ENCODE measurements at regions of chr4 and their contacts with region 1.

Region 1: GRCh38 chr4:54961357-54961975 is 163.9 kb downstream of the KDR start:
- DNase-seq: peak; percentile 2 to 4
- ATAC-seq: peak; percentile 64 to 66; a peak in 4 of 6 replicates
- H3K4me3 ChIP-seq: no peak overlapping the region
- H3K27ac ChIP-seq: no peak overlapping the region
- H3K4me1 ChIP-seq: no peaks in the 10 kb centered on the region
- CTCF ChIP-seq: peak; percentile 25
- EP300 ChIP-seq: no peak
- POLR2A ChIP-seq: no peak
- RAD21 ChIP-seq: peak in 1 of 2 experiments; percentile 35; a peak in 1 of 5 replicates

Region 2: GRCh38 chr4:54318904-54319303 is 642.6 kb before region 1 on chr4:
- CTCF ChIA-PET with region 1: interaction called, 11 read pairs
- POLR2A ChIA-PET with region 1: no interaction called
- DNase-seq: peak; percentile 11 to 54
- ATAC-seq: peak in 1 of 2 experiments; percentile 55; a peak in 3 of 6 replicates
- H3K4me3 ChIP-seq: no peak overlapping the region
- H3K27ac ChIP-seq: no peak overlapping the region
- H3K4me1 ChIP-seq: no peaks in the 10 kb centered on the region
- CTCF ChIP-seq: peak; percentile 39; the same call in 2 of the 3 replicates
- EP300 ChIP-seq: no peak
- POLR2A ChIP-seq: no peak
- RAD21 ChIP-seq: peak; percentile 14 to 40; a peak in 1 of 5 replicates

Region 3: DNA sequence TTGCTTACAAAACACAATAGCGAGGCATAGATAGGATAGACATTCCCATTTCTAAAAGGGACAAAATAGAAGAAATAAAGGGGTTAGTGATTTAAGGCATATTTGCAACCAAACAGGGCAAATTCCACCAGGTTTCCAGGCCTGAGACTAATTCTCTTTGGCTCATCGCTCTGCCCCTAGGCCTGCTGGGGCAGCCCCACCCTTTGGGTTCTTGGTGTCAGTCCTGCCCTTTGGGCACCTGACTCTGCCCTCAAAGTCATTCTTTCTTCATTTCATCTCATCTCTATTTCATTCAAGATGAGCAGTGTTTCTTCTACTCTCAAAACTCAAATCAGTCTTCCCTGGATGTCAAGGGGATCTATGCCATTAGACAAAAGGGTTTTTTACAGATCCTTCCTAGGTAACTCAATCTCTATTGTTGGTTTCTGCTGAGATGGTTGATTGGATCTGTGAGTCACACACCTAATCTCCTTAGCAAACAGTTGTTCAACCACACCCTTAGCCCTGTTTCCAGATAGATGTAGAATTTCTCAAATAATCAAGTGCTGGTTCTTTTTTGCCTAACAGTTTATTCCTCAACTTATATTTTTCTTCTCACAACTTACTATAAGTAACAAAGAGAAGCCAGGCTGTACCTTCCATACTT is 36.7 kb before region 1 on chr4:
- CTCF ChIA-PET with region 1: no interaction called
- POLR2A ChIA-PET with region 1: no interaction called
- DNase-seq: no peak
- ATAC-seq: no peak
- H3K4me3 ChIP-seq: no peak overlapping the region
- H3K27ac ChIP-seq: no peak overlapping the region
- H3K4me1 ChIP-seq: no peaks in the 10 kb centered on the region
- CTCF ChIP-seq: no peak
- EP300 ChIP-seq: no peak
- POLR2A ChIP-seq: no peak
- RAD21 ChIP-seq: no peak

Region 4: DNA sequence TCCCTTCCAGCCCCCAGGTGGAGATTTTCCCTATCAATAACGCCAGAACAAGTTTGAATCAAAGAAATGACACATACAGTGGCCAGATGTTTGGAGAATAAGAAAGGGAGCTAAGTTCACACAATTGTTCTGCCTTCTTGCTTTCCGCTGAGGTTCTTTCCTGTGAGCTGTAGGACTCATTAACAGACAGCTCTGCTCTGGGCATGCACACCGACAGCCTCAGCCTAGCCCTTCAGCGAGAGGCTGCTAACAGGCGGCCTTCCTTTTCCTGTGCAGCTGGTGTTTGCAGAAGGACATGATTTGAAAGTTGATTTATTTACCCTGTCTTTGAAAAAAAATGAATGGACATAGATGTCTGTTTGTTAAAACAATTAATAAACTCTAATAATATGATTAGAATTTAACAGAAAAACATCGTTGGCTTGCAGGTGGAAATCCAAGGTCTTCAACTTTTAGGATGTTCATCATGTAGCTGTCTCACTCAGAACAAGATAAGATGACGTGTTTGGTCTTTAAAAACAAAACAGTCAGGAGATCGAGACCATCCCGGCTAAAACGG is 19.4 kb before region 1 on chr4:
- CTCF ChIA-PET with region 1: no interaction called
- POLR2A ChIA-PET with region 1: no interaction called
- DNase-seq: no peak
- ATAC-seq: no peak
- H3K4me3 ChIP-seq: no peak overlapping the region
- H3K27ac ChIP-seq: no peak overlapping the region
- H3K4me1 ChIP-seq: no peaks in the 10 kb centered on the region
- CTCF ChIP-seq: no peak
- EP300 ChIP-seq: no peak
- POLR2A ChIP-seq: no peak
- RAD21 ChIP-seq: no peak

Region 5: DNA sequence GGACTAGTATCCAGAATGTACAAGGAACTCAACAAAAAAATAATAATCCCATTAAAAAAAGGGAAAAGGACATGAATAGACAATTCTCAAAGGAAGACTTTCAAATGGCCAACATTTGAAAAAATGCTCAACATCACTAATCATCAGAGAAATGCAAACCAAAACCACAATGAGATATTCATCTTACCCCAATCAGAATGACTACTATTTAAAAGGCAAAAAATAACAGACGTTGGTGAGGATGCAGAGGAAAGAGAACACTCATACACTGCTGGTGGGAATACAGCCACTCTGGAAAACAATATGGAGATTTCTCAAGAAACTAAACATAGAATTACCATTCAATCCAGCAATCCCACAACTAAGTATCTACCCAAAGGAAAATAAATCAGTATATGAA is 30.8 kb after region 1 on chr4:
- CTCF ChIA-PET with region 1: no interaction called
- POLR2A ChIA-PET with region 1: no interaction called
- DNase-seq: no peak
- ATAC-seq: no peak
- H3K4me3 ChIP-seq: no peak overlapping the region
- H3K27ac ChIP-seq: no peak overlapping the region
- H3K4me1 ChIP-seq: no peaks in the 10 kb centered on the region
- CTCF ChIP-seq: no peak
- EP300 ChIP-seq: no peak
- POLR2A ChIP-seq: no peak
- RAD21 ChIP-seq: no peak

Region 6: GRCh38 chr4:55008166-55009070 is 47.0 kb after region 1 on chr4:
- CTCF ChIA-PET with region 1: no interaction called
- POLR2A ChIA-PET with region 1: no interaction called
- DNase-seq: peak in 1 of 2 experiments; percentile 1
- ATAC-seq: no peak; a peak in 1 of 6 replicates
- H3K4me3 ChIP-seq: no peak overlapping the region
- H3K27ac ChIP-seq: no peak overlapping the region
- H3K4me1 ChIP-seq: no peaks in the 10 kb centered on the region
- CTCF ChIP-seq: no peak
- EP300 ChIP-seq: no peak
- POLR2A ChIP-seq: no peak
- RAD21 ChIP-seq: no peak

Measured in A549 (cell line).